GM12878 (cell line): ENCODE measurements at regions of chr2 and their contacts with region 1.

Region 1: GRCh38 chr2:138267161-138267901 is 234.2 kb upstream of the SPOPL start:
- DNase-seq: peak; percentile 47
- ATAC-seq: peak; percentile 88
- H3K4me3 ChIP-seq: no peak overlapping the region
- H3K27ac ChIP-seq: no peak overlapping the region
- H3K4me1 ChIP-seq: peaks cover 9% of the 10 kb centered on the region; the same call in 1 of the 2 replicates
- H3K27me3 ChIP-seq: no peaks in the 10 kb centered on the region
- CTCF ChIP-seq: no peak
- EP300 ChIP-seq: peak; percentile 29 to 77; a peak in 3 of 4 replicates
- POLR2A ChIP-seq: no peak
- RAD21 ChIP-seq: no peak

Region 2: DNA sequence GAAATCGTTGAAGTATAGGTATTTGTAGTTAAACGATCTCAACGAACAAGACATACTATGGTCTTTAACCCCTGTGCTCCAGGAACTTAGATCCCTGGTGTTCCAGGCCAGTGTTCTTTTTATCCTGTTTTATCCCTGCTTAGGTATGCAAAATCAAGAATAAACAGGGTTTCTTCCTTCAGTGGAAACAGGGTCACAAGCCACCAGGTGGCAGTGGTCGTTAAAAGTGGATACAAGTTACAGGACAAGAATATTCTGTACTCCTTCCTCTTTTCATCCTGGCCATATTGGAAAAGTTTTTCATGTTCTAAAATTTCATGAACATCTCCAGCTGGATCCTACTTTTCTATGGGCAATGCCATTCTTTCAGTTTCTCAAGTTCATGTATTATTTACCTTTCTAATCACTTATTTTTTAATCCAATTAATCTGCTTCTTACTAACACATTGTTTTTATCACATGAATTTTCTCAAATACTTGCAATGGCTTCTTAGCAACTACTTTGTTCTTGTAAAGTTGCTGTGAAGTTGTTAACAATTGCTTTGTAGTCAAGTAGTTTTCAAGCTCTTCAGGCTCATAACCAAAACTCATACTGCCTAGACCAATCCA is 319.5 kb before region 1 on chr2:
- CTCF ChIA-PET with region 1: no interaction called
- POLR2A ChIA-PET with region 1: no interaction called
- RAD21 ChIA-PET with region 1: interaction called, 5 read pairs
- SMC1A ChIA-PET with region 1: no interaction called
- in situ Hi-C with region 1: no loop called
- intact Hi-C with region 1: loop called (anchors 10 kb)
- DNase-seq: no peak
- ATAC-seq: peak; percentile 74
- H3K4me3 ChIP-seq: no peak overlapping the region
- H3K27ac ChIP-seq: no peak overlapping the region
- H3K4me1 ChIP-seq: no peaks in the 10 kb centered on the region
- H3K27me3 ChIP-seq: no peaks in the 10 kb centered on the region
- CTCF ChIP-seq: peak; percentile 49 to 58 (median 50); a peak in 4 of 6 replicates
- EP300 ChIP-seq: no peak
- POLR2A ChIP-seq: no peak
- RAD21 ChIP-seq: peak; percentile 69

Region 3: GRCh38 chr2:138058427-138058826 is 208.9 kb before region 1 on chr2:
- CTCF ChIA-PET with region 1: no interaction called
- POLR2A ChIA-PET with region 1: no interaction called
- RAD21 ChIA-PET with region 1: no interaction called
- SMC1A ChIA-PET with region 1: no interaction called
- in situ Hi-C with region 1: no loop called
- intact Hi-C with region 1: no loop called
- DNase-seq: no peak
- ATAC-seq: no peak
- H3K4me3 ChIP-seq: no peak overlapping the region
- H3K27ac ChIP-seq: no peak overlapping the region
- H3K4me1 ChIP-seq: no peaks in the 10 kb centered on the region
- H3K27me3 ChIP-seq: no peaks in the 10 kb centered on the region
- CTCF ChIP-seq: no peak
- EP300 ChIP-seq: no peak
- POLR2A ChIP-seq: no peak
- RAD21 ChIP-seq: no peak

Region 4: GRCh38 chr2:138237667-138238384 is 29.5 kb before region 1 on chr2:
- CTCF ChIA-PET with region 1: interaction called, 3 read pairs
- POLR2A ChIA-PET with region 1: no interaction called
- RAD21 ChIA-PET with region 1: interaction called, 10 read pairs
- SMC1A ChIA-PET with region 1: interaction called, 8 read pairs
- in situ Hi-C with region 1: no loop called
- intact Hi-C with region 1: no loop called
- DNase-seq: no peak
- ATAC-seq: no peak
- H3K4me3 ChIP-seq: no peak overlapping the region
- H3K27ac ChIP-seq: no peak overlapping the region
- H3K4me1 ChIP-seq: no peaks in the 10 kb centered on the region
- H3K27me3 ChIP-seq: no peaks in the 10 kb centered on the region
- CTCF ChIP-seq: no peak
- EP300 ChIP-seq: no peak
- POLR2A ChIP-seq: no peak
- RAD21 ChIP-seq: no peak

Region 5: DNA sequence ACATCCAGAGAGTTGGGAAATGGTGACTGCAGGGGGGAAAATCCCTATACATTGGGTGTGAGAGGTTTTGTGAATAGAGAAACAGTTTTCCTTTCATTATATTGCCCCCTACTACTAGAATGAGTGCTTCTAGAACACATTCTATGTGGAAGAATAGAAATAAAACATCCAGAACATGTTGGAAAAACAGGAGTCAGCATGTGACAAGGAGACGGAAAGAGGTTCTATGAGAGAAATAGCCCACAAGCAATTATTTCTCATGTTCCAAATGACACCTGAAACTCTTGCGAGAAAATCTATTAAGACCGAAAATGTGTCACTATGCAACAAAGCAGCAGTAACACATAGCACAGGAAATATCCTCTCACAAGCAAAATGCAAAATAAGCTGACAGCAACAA is 31.6 kb after region 1 on chr2:
- CTCF ChIA-PET with region 1: no interaction called
- POLR2A ChIA-PET with region 1: no interaction called
- RAD21 ChIA-PET with region 1: interaction called, 10 read pairs
- SMC1A ChIA-PET with region 1: interaction called, 12 read pairs
- in situ Hi-C with region 1: no loop called
- intact Hi-C with region 1: no loop called
- DNase-seq: peak; percentile 54
- ATAC-seq: peak; percentile 89
- H3K4me3 ChIP-seq: no peak overlapping the region
- H3K27ac ChIP-seq: peak overlapping the region; percentile 57
- H3K4me1 ChIP-seq: peaks cover 10% of the 10 kb centered on the region
- H3K27me3 ChIP-seq: no peaks in the 10 kb centered on the region
- CTCF ChIP-seq: no peak
- EP300 ChIP-seq: 0 out of 4 replicates have a peak, but pooled peaks of 1 of the 2 experiments have one; percentile 22
- POLR2A ChIP-seq: no peak
- RAD21 ChIP-seq: no peak

Region 6: GRCh38 chr2:138373993-138374408 is 106.7 kb after region 1 on chr2:
- CTCF ChIA-PET with region 1: interaction called, 3 read pairs
- POLR2A ChIA-PET with region 1: no interaction called
- RAD21 ChIA-PET with region 1: no interaction called
- SMC1A ChIA-PET with region 1: interaction called, 6 read pairs
- in situ Hi-C with region 1: no loop called
- intact Hi-C with region 1: loop called (anchors 2 kb)
- DNase-seq: peak; percentile 12
- ATAC-seq: peak; percentile 72
- H3K4me3 ChIP-seq: no peak overlapping the region
- H3K27ac ChIP-seq: no peak overlapping the region
- H3K4me1 ChIP-seq: no peaks in the 10 kb centered on the region
- H3K27me3 ChIP-seq: no peaks in the 10 kb centered on the region
- CTCF ChIP-seq: peak; percentile 49 to 66 (median 59)
- EP300 ChIP-seq: no peak
- POLR2A ChIP-seq: no peak
- RAD21 ChIP-seq: peak; percentile 86